MCF 10A (cell line): ENCODE measurements at regions of chr5 and their contacts with region 1.

Region 1: GRCh38 chr5:140391312-140391711 is 10.3 kb upstream of the ANKHD1 start:
- DNase-seq: peak; percentile 76
- H3K4me3 Mint-ChIP-seq: no peak overlapping the region
- H3K27ac Mint-ChIP-seq: peak overlapping the region; percentile 35
- H3K4me1 Mint-ChIP-seq: peaks cover 5% of the 10 kb centered on the region
- H3K27me3 Mint-ChIP-seq: no peaks in the 10 kb centered on the region
- CTCF ChIP-seq: no peak

Region 2: DNA sequence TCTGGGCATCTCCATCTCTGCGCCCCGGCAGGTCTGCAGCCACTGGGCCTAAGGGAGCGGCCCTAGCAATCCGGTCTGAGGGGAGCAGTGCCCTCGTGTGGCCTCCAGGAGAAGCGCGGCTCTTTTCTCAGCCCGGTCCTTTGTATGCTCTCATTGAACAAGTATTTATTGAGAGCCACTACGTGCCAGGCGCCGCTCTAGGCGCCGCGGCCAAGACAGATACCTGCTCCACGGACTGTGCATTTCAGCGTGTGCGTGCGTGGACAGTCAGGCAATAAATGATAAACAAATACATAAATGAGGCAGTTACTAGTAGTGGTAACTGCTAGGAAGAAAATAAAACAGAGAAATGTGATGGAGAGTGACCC is 33.6 kb before region 1 on chr5:
- CTCF ChIA-PET with region 1: interaction called, 10 read pairs
- POLR2A ChIA-PET with region 1: no interaction called
- intact Hi-C with region 1: no loop called
- DNase-seq: peak; percentile 91
- H3K4me3 Mint-ChIP-seq: peak overlapping the region; percentile 33
- H3K27ac Mint-ChIP-seq: no peak overlapping the region
- H3K4me1 Mint-ChIP-seq: peaks cover 8% of the 10 kb centered on the region
- H3K27me3 Mint-ChIP-seq: no peaks in the 10 kb centered on the region
- CTCF ChIP-seq: peak; percentile 97

Region 3: DNA sequence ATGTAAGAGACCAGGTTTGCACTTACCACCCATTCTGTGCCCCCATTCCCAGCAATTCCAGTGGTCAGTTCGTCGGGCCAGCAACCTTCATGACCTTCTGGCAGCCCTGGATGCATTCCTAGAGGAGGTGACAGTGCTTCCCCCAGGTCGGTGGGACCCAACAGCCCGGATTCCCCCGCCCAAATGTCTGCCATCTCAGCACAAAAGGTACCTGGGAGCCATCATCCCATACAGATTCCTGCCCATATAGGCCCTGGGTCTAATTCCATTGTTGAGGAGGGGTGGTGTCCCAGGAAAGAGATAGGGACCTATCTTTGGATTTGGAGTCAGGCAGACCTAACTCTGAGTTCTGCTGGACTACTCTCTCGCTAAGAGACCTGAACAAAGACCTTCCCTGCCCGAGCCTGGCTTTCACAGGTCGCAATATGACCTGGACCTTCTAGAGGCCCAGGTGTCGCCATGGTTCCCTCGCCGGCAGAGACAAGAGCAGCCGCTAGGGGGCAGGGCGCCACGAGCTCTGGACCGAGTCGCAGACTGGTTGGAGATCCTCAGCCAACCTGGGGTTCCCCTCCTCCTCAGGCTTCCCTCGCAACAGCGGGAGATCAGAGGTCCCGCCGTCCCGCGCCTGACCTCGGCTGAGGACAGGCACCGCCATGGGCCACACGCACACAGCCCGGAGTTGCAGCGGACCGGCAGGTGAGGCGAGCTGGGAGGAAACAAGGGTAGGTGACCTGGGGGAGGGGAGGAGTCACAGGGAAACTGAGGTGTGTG is 28.3 kb before region 1 on chr5:
- CTCF ChIA-PET with region 1: interaction called, 11 read pairs
- POLR2A ChIA-PET with region 1: interaction called, 3 read pairs
- intact Hi-C with region 1: no loop called
- DNase-seq: peak; percentile 86
- H3K4me3 Mint-ChIP-seq: peak overlapping the region; percentile 72
- H3K27ac Mint-ChIP-seq: no peak overlapping the region
- H3K4me1 Mint-ChIP-seq: no peaks in the 10 kb centered on the region
- H3K27me3 Mint-ChIP-seq: no peaks in the 10 kb centered on the region
- CTCF ChIP-seq: peak; percentile 99

Region 4: GRCh38 chr5:141512390-141512910 is 1121.1 kb after region 1 on chr5:
- CTCF ChIA-PET with region 1: no interaction called
- POLR2A ChIA-PET with region 1: no interaction called
- intact Hi-C with region 1: no loop called
- DNase-seq: peak; percentile 81
- H3K4me3 Mint-ChIP-seq: no peak overlapping the region
- H3K27ac Mint-ChIP-seq: peak overlapping the region; percentile 81
- H3K4me1 Mint-ChIP-seq: peaks cover 58% of the 10 kb centered on the region
- H3K27me3 Mint-ChIP-seq: no peaks in the 10 kb centered on the region
- CTCF ChIP-seq: peak; percentile 98